PC-9 (cell line): ENCODE measurements at regions of chr16 and their contacts with region 1.

Region 1: DNA sequence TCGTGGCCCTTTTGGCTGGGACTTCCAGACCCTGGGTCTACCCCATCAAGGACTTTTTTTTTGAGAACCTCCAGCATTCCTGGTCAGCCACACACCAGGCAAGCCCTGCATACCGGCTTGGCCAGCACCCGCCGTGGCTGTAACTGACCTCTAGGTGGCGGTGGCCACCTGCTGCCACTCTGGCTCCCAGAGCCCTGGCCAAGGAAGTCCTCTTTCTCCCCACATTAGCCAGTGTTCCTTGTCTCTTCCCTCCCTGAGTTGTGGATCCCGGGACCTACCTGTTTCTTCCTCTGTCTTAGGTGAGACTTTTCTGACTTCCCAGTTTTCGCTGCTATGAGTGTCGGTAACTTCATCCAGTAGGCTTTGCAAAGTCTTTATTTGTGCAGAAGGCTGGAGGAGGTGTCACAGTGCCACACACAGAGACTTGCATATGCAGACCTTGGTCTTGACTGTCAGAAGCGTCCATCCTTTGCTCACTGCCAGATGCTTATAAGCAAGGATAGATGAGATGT is 348.3 kb downstream of the CPPED1 start:
- DNase-seq: peak; percentile 38 to 80
- H3K4me3 ChIP-seq: no peak overlapping the region
- H3K27ac ChIP-seq: no peak overlapping the region
- H3K4me1 ChIP-seq: no peaks in the 10 kb centered on the region
- H3K27me3 ChIP-seq: no peaks in the 10 kb centered on the region
- CTCF ChIP-seq: peak; percentile 95

Region 2: DNA sequence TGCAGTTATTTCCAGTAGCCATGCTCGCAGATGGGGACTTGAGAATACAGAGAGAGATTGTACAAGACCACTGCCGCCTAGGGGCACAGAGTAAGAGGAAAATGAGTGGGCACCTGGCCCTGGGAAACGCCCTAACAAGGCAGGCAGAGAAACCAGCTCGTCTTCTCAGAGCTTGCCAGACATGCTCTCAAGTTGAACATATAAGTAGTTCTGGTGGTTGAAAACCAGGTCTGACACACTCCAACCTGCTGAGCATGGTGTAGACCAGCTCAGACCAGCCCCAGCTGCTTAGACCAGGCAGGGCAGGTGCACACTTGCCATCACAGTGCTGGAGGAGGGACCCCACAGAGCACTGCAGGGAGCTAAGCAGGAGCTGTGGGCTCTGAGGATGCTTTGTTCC is 97.8 kb after region 1 on chr16:
- CTCF ChIA-PET with region 1: no interaction called
- POLR2A ChIA-PET with region 1: no interaction called
- intact Hi-C with region 1: no loop called
- DNase-seq: no peak
- H3K4me3 ChIP-seq: no peak overlapping the region
- H3K27ac ChIP-seq: no peak overlapping the region
- H3K4me1 ChIP-seq: no peaks in the 10 kb centered on the region
- H3K27me3 ChIP-seq: no peaks in the 10 kb centered on the region
- CTCF ChIP-seq: no peak

Region 3: GRCh38 chr16:13453938-13454553 is 998.7 kb after region 1 on chr16:
- CTCF ChIA-PET with region 1: no interaction called
- POLR2A ChIA-PET with region 1: no interaction called
- intact Hi-C with region 1: loop called (anchors 5 kb)
- DNase-seq: peak in 1 of 2 experiments; percentile 56
- H3K4me3 ChIP-seq: no peak overlapping the region
- H3K27ac ChIP-seq: no peak overlapping the region
- H3K4me1 ChIP-seq: no peaks in the 10 kb centered on the region
- H3K27me3 ChIP-seq: no peaks in the 10 kb centered on the region
- CTCF ChIP-seq: peak; percentile 90

Region 4: GRCh38 chr16:13866073-13866472 is 1410.7 kb after region 1 on chr16:
- CTCF ChIA-PET with region 1: no interaction called
- POLR2A ChIA-PET with region 1: no interaction called
- intact Hi-C with region 1: loop called (anchors 10 kb)
- DNase-seq: peak; percentile 55 to 66
- H3K4me3 ChIP-seq: no peak overlapping the region
- H3K27ac ChIP-seq: no peak overlapping the region
- H3K4me1 ChIP-seq: no peaks in the 10 kb centered on the region
- H3K27me3 ChIP-seq: peaks cover 45% of the 10 kb centered on the region
- CTCF ChIP-seq: peak; percentile 68